ENCODE measurements at regions of chr12 and their contacts with region 1.

Region 1: DNA sequence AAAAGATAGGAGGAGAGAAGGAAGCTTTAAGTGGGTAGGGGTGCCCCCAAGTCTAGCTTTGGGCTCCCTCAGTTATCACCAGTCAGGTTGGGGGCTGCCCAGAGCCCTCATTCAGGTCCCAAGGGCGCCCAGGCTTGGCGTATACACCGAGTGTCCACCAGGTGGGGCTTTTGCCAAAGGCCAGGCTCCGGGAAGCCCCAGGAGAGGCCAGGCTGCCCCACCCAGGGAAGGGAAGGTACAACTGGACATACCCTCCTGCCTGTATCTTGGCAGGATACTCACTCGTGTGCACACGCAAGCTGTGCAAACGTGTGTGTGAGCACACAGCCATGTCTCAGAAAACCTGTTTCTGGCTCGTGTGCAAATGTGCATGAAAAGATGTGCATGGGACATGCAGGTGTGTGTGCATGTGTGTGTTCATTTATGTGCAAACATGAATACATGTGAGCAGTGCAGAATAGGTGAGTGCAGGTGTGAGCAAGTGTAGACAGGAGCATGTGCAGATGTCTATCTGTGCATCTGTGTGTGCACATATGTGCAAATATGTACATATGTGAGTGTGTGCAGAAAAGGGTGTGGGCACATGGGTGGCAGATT is 103.9 kb upstream of the MYL2 start:
- DNase-seq: peak; percentile 52
- ATAC-seq: peak; percentile 99
- H3K4me3 ChIP-seq: no peak overlapping the region
- H3K27ac ChIP-seq: no peak overlapping the region
- H3K4me1 ChIP-seq: peaks cover 0 to 4% of the 10 kb centered on the region in 2 experiments; a peak in 1 of 4 replicates
- H3K27me3 ChIP-seq: 0 out of 2 replicates have a peak, but pooled peaks cover 3% of the 10 kb centered on the region
- CTCF ChIP-seq: peak; percentile 87 to 96 (median 92)
- POLR2A ChIP-seq: no peak
- RAD21 ChIP-seq: peak; percentile 96

Region 2: DNA sequence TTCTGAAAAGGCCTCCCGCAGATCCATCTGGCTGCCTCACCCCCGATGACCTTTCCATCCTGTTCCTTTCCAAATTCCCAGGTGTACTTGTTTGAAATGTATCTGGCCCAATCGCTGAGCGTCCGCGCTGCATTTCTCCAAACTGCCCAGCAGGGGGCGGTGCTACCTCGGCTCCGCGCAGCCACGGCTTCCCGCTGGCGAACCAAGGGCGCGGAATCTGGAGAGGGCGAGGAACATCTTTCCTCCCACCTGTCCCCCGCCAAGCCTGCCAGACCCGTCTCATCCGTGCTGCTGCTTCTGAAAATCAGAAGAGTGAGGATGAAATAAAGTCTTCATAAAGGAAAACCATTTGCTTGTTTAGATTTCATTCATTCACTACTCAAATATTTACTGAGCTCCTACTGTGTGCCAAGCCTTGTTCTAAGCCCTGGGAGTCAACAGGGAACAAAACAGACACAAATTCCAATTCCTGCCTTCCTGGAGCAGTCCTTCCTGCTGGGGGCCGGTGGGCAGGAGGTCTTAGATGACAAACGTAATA is 87.1 kb before region 1 on chr12:
- CTCF ChIA-PET with region 1: no interaction called
- POLR2A ChIA-PET with region 1: no interaction called
- RAD21 ChIA-PET with region 1: no interaction called
- intact Hi-C with region 1: loop called (anchors 2 kb)
- DNase-seq: peak; percentile 57
- ATAC-seq: peak; percentile 61
- H3K4me3 ChIP-seq: peak overlapping the region; percentile 23 to 41
- H3K27ac ChIP-seq: no peak overlapping the region
- H3K4me1 ChIP-seq: peaks cover 25 to 53% of the 10 kb centered on the region in 2 experiments
- H3K27me3 ChIP-seq: no peaks in the 10 kb centered on the region
- CTCF ChIP-seq: peak; percentile 68 to 93 (median 90)
- POLR2A ChIP-seq: no peak
- RAD21 ChIP-seq: peak; percentile 85

Region 3: GRCh38 chr12:111174251-111174960 is 150.1 kb after region 1 on chr12:
- CTCF ChIA-PET with region 1: no interaction called
- POLR2A ChIA-PET with region 1: no interaction called
- RAD21 ChIA-PET with region 1: no interaction called
- intact Hi-C with region 1: loop called (anchors 1 kb)
- DNase-seq: peak; percentile 4
- ATAC-seq: peak; percentile 77
- H3K4me3 ChIP-seq: no peak overlapping the region
- H3K27ac ChIP-seq: no peak overlapping the region
- H3K4me1 ChIP-seq: no peaks in the 10 kb centered on the region
- H3K27me3 ChIP-seq: peaks cover 44% of the 10 kb centered on the region
- CTCF ChIP-seq: peak; percentile 27 to 45 (median 35); a peak in 4 of 6 replicates
- POLR2A ChIP-seq: no peak
- RAD21 ChIP-seq: peak; percentile 67

Region 4: GRCh38 chr12:111298582-111299436 is 274.5 kb after region 1 on chr12:
- CTCF ChIA-PET with region 1: interaction called, 6 read pairs
- POLR2A ChIA-PET with region 1: no interaction called
- RAD21 ChIA-PET with region 1: interaction called in 1 of 2 experiments, 3 read pairs
- intact Hi-C with region 1: loop called (anchors 1 kb)
- DNase-seq: peak; percentile 33
- ATAC-seq: peak; percentile 94
- H3K4me3 ChIP-seq: no peak overlapping the region
- H3K27ac ChIP-seq: no peak overlapping the region
- H3K4me1 ChIP-seq: no peaks in the 10 kb centered on the region
- H3K27me3 ChIP-seq: no peaks in the 10 kb centered on the region
- CTCF ChIP-seq: peak; percentile 90 to 98 (median 95)
- POLR2A ChIP-seq: no peak
- RAD21 ChIP-seq: peak; percentile 75